A549 (cell line): ENCODE measurements at regions of chr16 and their contacts with region 1.

Region 1: GRCh38 chr16:1363501-1364041 is 11.8 kb downstream of the GNPTG start:
- DNase-seq: peak; percentile 67 to 76
- ATAC-seq: peak; percentile 82 to 88
- H3K4me3 ChIP-seq: no peak overlapping the region
- H3K27ac ChIP-seq: 0 out of 6 replicates have a peak overlapping the region, but pooled peaks of 1 of the 2 experiments have one; percentile 0
- H3K4me1 ChIP-seq: peaks cover 3% of the 10 kb centered on the region
- CTCF ChIP-seq: peak; percentile 83
- EP300 ChIP-seq: no peak
- POLR2A ChIP-seq: no peak
- RAD21 ChIP-seq: peak; percentile 45 to 60

Region 2: DNA sequence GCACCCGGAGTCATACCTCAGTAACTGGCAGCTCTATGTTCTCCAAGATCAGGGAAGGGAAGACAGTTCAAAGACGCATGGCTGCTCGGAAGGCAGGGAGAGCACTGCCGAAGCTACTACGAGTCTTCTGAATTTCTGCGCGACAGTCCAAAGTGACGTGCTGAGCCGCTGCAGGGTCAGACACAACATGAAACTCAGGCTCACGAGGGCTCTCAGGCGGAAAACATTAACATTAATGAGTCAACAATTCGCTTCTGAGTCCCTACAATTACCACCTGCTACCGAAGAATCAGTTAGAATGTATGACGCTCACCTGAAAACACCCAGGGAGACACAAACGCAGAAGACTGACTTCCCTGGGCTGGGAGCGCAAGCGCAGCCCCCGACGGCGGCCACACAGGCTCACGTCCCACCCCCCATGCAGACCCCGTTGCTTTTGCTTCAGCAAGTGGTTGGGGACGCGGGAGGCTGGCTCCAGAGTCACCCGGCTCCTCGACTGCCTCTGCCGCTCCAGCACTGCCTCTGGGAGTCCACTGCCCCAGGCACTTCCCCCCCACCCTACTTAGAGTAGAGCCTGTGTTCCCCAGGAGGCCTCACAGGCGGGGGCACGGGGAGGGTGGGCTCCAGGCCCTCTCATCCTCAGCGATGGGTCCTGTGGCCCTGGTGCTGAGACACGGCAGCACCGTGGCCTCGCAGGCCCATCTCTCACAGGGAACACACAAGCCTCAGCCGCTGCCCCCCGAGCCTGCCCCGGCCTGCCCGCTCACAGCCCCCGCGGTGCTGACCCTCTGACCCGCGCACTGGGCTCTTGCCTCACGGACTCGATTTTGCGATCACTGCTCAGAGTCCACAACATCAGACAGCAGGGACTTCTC is 431.7 kb before region 1 on chr16:
- CTCF ChIA-PET with region 1: no interaction called
- POLR2A ChIA-PET with region 1: no interaction called
- DNase-seq: no peak
- ATAC-seq: no peak
- H3K4me3 ChIP-seq: no peak overlapping the region
- H3K27ac ChIP-seq: no peak overlapping the region
- H3K4me1 ChIP-seq: no peaks in the 10 kb centered on the region
- CTCF ChIP-seq: no peak
- EP300 ChIP-seq: no peak
- POLR2A ChIP-seq: no peak
- RAD21 ChIP-seq: no peak

Region 3: DNA sequence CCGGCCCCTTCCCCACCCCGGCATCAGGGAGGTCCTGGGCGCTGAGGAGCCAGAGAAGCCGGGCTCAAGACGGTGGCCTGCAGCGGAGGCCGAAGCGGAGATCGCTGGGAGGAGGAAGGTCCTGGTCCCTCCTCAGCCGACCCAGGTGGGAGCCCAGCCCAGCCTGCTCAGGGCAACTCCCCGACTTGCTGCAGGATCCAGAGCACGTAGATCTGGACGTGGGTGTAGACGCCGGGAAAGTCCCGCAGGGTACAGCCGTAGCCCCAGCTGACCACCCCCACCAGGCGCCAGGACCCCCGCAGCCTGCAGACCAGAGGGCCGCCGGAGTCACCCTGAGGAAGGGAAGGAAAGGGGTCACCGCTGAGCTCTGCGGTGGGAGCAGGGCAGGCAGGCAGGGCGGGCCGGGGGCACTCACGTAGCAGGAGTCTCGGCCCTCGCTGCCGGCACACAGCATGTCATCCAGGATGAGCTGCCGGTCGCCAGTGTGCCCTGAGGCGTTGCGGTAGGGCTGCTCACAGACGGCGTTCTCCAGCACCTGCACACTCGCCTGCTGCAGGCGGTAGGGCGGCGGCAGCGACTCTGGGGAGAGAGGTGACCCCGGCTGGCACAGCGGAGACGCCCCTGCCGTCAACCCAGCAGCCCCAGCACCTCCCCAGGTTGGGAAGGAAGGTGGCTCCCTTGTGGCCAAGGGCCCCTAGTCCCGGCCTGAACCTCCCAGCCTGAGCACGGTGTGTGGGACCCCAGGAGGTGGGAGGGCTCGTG is 102.3 kb before region 1 on chr16:
- CTCF ChIA-PET with region 1: no interaction called
- POLR2A ChIA-PET with region 1: no interaction called
- DNase-seq: no peak
- ATAC-seq: peak in 1 of 2 experiments; percentile 17; a peak in 3 of 6 replicates
- H3K4me3 ChIP-seq: no peak overlapping the region
- H3K27ac ChIP-seq: no peak overlapping the region
- H3K4me1 ChIP-seq: 0 out of 3 replicates have a peak, but pooled peaks cover 5% of the 10 kb centered on the region
- CTCF ChIP-seq: no peak
- EP300 ChIP-seq: no peak
- POLR2A ChIP-seq: no peak
- RAD21 ChIP-seq: no peak

Region 4: GRCh38 chr16:1288611-1289474 is 74.7 kb before region 1 on chr16:
- CTCF ChIA-PET with region 1: no interaction called
- POLR2A ChIA-PET with region 1: no interaction called
- DNase-seq: no peak
- ATAC-seq: no peak
- H3K4me3 ChIP-seq: no peak overlapping the region
- H3K27ac ChIP-seq: no peak overlapping the region
- H3K4me1 ChIP-seq: peaks cover 8% of the 10 kb centered on the region; the same call in 1 of the 3 replicates
- CTCF ChIP-seq: no peak
- EP300 ChIP-seq: no peak
- POLR2A ChIP-seq: no peak
- RAD21 ChIP-seq: no peak

Region 5: DNA sequence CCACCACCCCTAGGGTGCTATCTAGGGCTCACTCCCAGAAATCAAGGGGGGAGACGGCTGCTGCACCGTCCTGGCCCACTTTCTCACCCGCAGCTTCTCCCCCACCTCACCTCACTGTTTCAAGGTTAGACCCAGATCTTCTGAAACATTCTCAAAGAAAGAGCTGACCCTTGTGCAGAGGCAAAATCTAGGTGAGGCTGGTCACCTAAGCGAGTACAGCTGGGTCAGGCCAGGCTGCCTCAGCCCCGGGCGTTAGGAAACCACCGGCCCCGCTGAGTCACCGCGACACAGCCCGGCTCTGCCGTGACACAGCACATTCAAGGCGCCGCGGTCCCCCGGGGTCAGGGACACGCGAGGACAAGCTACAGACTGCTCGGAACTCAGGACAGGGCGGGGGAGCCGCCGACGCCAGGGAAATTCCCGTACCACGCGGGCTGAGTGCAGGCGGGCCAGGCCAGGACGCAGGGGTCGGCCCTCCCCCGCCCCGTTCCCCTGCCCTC is 15.3 kb after region 1 on chr16:
- CTCF ChIA-PET with region 1: interaction called, 127 read pairs
- POLR2A ChIA-PET with region 1: interaction called, 8 read pairs
- DNase-seq: peak; percentile 76 to 79
- ATAC-seq: peak; percentile 74 to 78
- H3K4me3 ChIP-seq: peak overlapping the region; percentile 70
- H3K27ac ChIP-seq: peak overlapping the region; percentile 93 to 100
- H3K4me1 ChIP-seq: peaks cover 27% of the 10 kb centered on the region
- CTCF ChIP-seq: no peak
- EP300 ChIP-seq: no peak
- POLR2A ChIP-seq: peak; percentile 43
- RAD21 ChIP-seq: no peak

Region 6: GRCh38 chr16:1408171-1408837 is 44.7 kb after region 1 on chr16:
- CTCF ChIA-PET with region 1: interaction called, 27 read pairs
- POLR2A ChIA-PET with region 1: interaction called, 4 read pairs
- DNase-seq: peak; percentile 78 to 88
- ATAC-seq: peak; percentile 87 to 93
- H3K4me3 ChIP-seq: peak overlapping the region; percentile 55
- H3K27ac ChIP-seq: peak overlapping the region; percentile 50 to 75; a peak in 5 of 6 replicates
- H3K4me1 ChIP-seq: peaks cover 7% of the 10 kb centered on the region; the same call in 2 of the 3 replicates
- CTCF ChIP-seq: no peak
- EP300 ChIP-seq: no peak
- POLR2A ChIP-seq: peak; percentile 12; the same call in 1 of the 2 replicates
- RAD21 ChIP-seq: no peak

Region 7: DNA sequence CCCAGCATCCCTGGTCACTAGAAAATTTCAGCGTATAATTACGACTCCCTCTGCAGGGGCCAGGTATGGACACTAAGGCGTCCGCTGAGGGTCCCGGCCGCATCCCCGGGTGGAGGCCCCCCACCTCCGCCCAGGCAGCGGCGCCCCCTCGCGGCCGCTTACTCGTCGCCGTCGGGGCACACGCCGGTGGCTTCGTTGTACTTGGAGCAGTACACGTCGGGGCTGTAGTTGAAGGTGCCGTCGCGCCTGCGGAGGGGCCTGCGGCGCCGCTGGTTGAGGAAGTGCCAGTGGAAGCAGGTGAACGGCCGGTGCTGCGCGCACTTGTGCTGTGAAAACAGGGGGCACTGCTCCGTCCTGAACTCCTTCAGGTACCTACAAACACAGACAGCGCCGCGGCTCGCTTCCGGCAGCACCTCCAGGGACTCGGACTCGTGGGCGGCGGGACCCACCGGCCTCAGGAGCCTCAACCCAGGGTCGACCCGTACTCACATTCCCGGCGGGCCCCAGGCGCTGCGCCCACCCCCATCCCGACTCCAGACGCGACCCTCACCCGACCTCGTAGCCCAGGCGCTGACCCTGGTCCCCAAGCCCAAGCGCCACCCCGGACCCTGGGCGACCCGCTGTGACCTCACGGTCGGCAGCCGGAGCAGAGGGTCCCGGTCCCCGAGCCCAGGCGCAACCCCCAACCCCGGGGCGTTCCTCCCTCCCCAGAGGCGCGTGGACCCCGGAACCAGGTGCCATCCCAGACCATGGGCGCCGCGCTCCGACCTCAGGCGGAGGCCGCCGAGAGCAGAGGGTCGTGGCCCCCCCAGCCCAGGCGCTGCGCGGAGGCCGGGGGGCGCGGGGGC is 50.3 kb after region 1 on chr16:
- CTCF ChIA-PET with region 1: interaction called, 27 read pairs
- POLR2A ChIA-PET with region 1: interaction called, 4 read pairs
- DNase-seq: peak; percentile 61 to 79
- ATAC-seq: peak; percentile 74 to 75
- H3K4me3 ChIP-seq: peak overlapping the region; percentile 89
- H3K27ac ChIP-seq: peak overlapping the region; percentile 83 to 91
- H3K4me1 ChIP-seq: peaks cover 22% of the 10 kb centered on the region; the same call in 2 of the 3 replicates
- CTCF ChIP-seq: peak; percentile 78
- EP300 ChIP-seq: no peak
- POLR2A ChIP-seq: no peak
- RAD21 ChIP-seq: peak; percentile 39 to 62

Region 8: GRCh38 chr16:1481906-1482835 is 118.6 kb after region 1 on chr16:
- CTCF ChIA-PET with region 1: no interaction called
- POLR2A ChIA-PET with region 1: no interaction called
- DNase-seq: no peak
- ATAC-seq: no peak; a peak in 1 of 6 replicates
- H3K4me3 ChIP-seq: no peak overlapping the region
- H3K27ac ChIP-seq: no peak overlapping the region
- H3K4me1 ChIP-seq: no peaks in the 10 kb centered on the region
- CTCF ChIP-seq: no peak
- EP300 ChIP-seq: no peak
- POLR2A ChIP-seq: no peak
- RAD21 ChIP-seq: no peak